ENCODE measurements at regions of chr16 and their contacts with region 1.

Region 1: GRCh38 chr16:55628306-55628968 is 27.4 kb upstream of the SLC6A2 start:
- DNase-seq: no peak
- H3K4me3 ChIP-seq: no peak overlapping the region
- H3K27ac ChIP-seq: no peak overlapping the region
- H3K4me1 ChIP-seq: no peaks in the 10 kb centered on the region
- H3K27me3 ChIP-seq: no peaks in the 10 kb centered on the region
- CTCF ChIP-seq: no peak

Region 2: GRCh38 chr16:55678161-55678821 is 49.9 kb after region 1 on chr16:
- CTCF ChIA-PET with region 1: no interaction called
- dilution Hi-C with region 1: loop called (anchors 5 kb)
- in situ Hi-C with region 1: no loop called
- intact Hi-C with region 1: no loop called
- DNase-seq: no peak
- H3K4me3 ChIP-seq: no peak overlapping the region
- H3K27ac ChIP-seq: no peak overlapping the region
- H3K4me1 ChIP-seq: no peaks in the 10 kb centered on the region
- H3K27me3 ChIP-seq: no peaks in the 10 kb centered on the region
- CTCF ChIP-seq: no peak

Region 3: DNA sequence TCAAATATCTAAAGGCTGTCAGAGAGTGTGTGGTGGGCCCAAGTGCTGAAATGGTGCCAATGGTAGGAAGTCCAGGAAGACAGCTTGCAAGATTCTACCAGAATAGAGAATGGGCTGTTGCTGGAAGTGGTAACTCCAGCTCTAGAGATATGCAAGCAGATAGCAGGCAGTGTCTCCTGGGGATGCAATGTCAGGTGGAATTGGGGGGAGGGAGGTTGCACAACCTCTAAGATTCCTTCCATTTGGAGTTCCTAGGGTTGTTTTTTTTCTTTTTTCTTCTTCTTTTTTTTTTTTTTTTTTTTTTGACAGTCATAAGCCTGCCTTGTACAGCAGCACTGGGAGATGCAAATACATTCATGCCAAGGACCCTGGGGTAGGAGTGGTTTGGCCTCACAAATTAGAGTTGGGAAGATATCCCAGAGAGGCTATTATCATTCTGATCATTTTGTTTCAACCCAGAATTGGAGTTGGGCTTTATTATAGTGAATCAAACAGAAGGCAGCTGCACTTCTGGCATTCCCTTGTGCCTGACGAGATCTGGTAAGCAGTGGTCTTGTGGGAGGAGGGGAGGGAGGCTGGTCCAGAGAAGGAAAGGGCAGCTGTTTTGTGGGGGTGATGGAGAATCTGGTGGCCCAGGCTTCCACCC is 78.4 kb after region 1 on chr16:
- CTCF ChIA-PET with region 1: no interaction called
- dilution Hi-C with region 1: loop called (anchors 5 kb)
- in situ Hi-C with region 1: no loop called
- intact Hi-C with region 1: no loop called
- DNase-seq: no peak
- H3K4me3 ChIP-seq: no peak overlapping the region
- H3K27ac ChIP-seq: no peak overlapping the region
- H3K4me1 ChIP-seq: no peaks in the 10 kb centered on the region
- H3K27me3 ChIP-seq: no peaks in the 10 kb centered on the region
- CTCF ChIP-seq: no peak